ENCODE measurements at regions of chr10 and their contacts with region 1.

Region 1: DNA sequence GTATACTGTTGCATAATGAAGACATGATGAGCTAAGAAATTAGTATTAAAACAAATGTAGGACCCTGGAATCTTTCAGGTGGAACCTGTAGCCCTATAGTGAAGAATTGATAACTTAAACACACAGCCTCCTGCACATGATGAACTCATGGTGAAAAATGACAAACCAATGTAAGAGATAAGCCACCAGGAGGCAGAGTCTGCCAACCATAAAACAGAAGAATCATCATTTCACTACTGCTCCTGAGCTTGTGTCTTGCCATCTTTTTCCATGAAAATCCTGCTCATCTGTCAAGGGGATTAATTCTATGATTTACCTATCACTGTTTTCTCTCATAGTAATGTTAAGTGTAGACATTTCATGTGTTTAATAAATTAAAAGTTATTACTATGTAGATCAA is 363.9 kb downstream of the MALRD1 start:
- DNase-seq: no peak
- ATAC-seq: no peak
- H3K4me3 ChIP-seq: no peak overlapping the region
- H3K27ac ChIP-seq: no peak overlapping the region
- H3K4me1 ChIP-seq: no peaks in the 10 kb centered on the region
- H3K27me3 ChIP-seq: no peaks in the 10 kb centered on the region

Region 2: GRCh38 chr10:19480353-19480752 is 67.8 kb after region 1 on chr10:
- intact Hi-C with region 1: no loop called
- DNase-seq: no peak
- ATAC-seq: no peak
- H3K4me3 ChIP-seq: no peak overlapping the region
- H3K27ac ChIP-seq: no peak overlapping the region
- H3K4me1 ChIP-seq: peaks cover 5 to 7% of the 10 kb centered on the region in 2 donors
- H3K27me3 ChIP-seq: no peaks in the 10 kb centered on the region

Region 3: GRCh38 chr10:19788075-19788686 is 375.6 kb after region 1 on chr10:
- intact Hi-C with region 1: loop called (anchors 10 kb)
- DNase-seq: no peak
- ATAC-seq: no peak
- H3K4me3 ChIP-seq: no peak overlapping the region
- H3K27ac ChIP-seq: no peak overlapping the region
- H3K4me1 ChIP-seq: no peaks in the 10 kb centered on the region
- H3K27me3 ChIP-seq: no peaks in the 10 kb centered on the region

Region 4: GRCh38 chr10:20768843-20769242 is 1356.3 kb after region 1 on chr10:
- intact Hi-C with region 1: loop called (anchors 10 kb)
- DNase-seq: no peak
- ATAC-seq: no peak
- H3K4me3 ChIP-seq: no peak overlapping the region
- H3K27ac ChIP-seq: no peak overlapping the region
- H3K4me1 ChIP-seq: no peaks in the 10 kb centered on the region
- H3K27me3 ChIP-seq: no peaks in the 10 kb centered on the region

Region 5: GRCh38 chr10:20776384-20777118 is 1364.0 kb after region 1 on chr10:
- intact Hi-C with region 1: loop called in 1 of 2 experiments (anchors 10 kb)
- DNase-seq: no peak
- ATAC-seq: no peak
- H3K4me3 ChIP-seq: no peak overlapping the region
- H3K27ac ChIP-seq: no peak overlapping the region
- H3K4me1 ChIP-seq: no peaks in the 10 kb centered on the region
- H3K27me3 ChIP-seq: no peaks in the 10 kb centered on the region

Region 6: DNA sequence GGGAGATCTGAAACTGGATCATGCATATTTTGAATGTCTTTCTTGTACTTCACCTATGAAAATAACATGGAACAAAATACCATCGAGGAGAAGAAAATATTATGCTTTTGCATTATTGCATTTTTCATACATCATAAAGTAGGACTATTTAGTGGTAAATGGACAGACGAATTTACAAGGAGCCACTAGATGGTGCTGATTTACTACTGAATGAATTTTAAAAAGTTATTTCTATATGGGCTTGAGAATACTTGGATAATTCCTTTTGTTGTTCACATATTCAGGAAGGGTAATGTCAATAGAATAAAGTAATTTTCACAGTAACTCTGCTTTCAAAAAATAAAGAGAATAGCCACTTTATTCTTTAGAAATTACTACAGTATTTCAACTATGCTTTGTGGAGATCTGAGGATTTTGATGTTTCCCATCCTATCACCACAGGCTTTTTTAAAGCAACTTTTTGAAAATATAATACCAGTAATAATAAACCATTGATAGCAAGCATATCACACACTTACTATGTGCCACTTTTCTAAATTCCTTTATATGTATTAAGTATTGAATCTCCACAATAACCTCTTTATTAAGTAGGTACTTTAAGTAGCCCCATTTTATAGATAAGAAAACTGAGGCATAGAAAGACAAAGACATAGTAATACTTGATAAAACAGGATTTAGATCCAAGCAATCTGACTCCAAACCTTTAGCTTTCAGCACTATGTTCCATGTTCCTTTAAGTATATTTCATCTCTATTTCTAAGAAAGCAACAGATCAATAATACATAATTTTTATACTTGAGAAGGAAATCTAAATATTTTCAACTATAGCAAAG is 1446.0 kb after region 1 on chr10:
- intact Hi-C with region 1: loop called in 1 of 2 experiments (anchors 10 kb)
- DNase-seq: no peak
- ATAC-seq: no peak
- H3K4me3 ChIP-seq: no peak overlapping the region
- H3K27ac ChIP-seq: no peak overlapping the region
- H3K4me1 ChIP-seq: no peaks in the 10 kb centered on the region
- H3K27me3 ChIP-seq: no peaks in the 10 kb centered on the region

Measured in aorta (tissue), 5 donors.